Activated T-helper 1 cell treated with anti-CD3 and anti-CD28 coated beads, Interleukin-12 subunit alpha, Interleukin-12 subunit beta, Interleukin-2, Interleukin-4 antibody, amounts not matched to agents 30 ng/mL and 10 ng/mL and 1 ng/mL, durations not matched to agents 14 hours and 24 hours and 36 hours (primary cell): ENCODE measurements at regions of chr22 and their contacts with region 1.

Region 1: DNA sequence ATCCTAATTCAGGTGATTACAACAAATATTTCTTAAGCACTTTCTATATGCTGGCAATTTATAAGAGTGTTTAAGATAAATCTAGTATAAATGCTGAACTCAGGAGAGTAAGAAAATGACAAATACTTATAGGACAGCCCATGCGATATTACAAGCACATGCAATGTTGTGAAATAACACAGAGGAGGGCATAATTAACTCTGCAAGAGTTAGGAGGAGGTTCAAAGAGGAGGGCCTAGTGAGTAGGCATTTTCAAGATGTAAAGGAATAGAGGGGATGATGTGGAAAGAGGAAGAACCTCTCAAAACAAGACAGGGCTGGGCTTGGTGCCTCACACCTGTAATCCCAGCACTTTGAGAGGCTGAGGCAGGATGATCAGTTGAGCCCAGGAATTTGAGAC is 37.1 kb upstream of the IL17RA start:
- DNase-seq: no peak
- H3K4me3 Mint-ChIP-seq: no peak overlapping the region
- H3K27ac Mint-ChIP-seq: no peak overlapping the region
- H3K4me1 Mint-ChIP-seq: no peaks in the 10 kb centered on the region
- H3K27me3 Mint-ChIP-seq: peaks cover 4% of the 10 kb centered on the region

Region 2: GRCh38 chr22:16989915-16990314 is 57.7 kb before region 1 on chr22:
- intact Hi-C with region 1: loop called (anchors 10 kb)
- DNase-seq: no peak
- H3K4me3 Mint-ChIP-seq: no peak overlapping the region
- H3K27ac Mint-ChIP-seq: no peak overlapping the region
- H3K4me1 Mint-ChIP-seq: no peaks in the 10 kb centered on the region
- H3K27me3 Mint-ChIP-seq: peaks cover 6% of the 10 kb centered on the region

Region 3: GRCh38 chr22:17074648-17075002 is 27.0 kb after region 1 on chr22:
- intact Hi-C with region 1: no loop called
- DNase-seq: no peak
- H3K4me3 Mint-ChIP-seq: no peak overlapping the region
- H3K27ac Mint-ChIP-seq: no peak overlapping the region
- H3K4me1 Mint-ChIP-seq: peaks cover 21% of the 10 kb centered on the region
- H3K27me3 Mint-ChIP-seq: peaks cover 36% of the 10 kb centered on the region